Activated T-helper 1 cell treated with anti-CD3 and anti-CD28 coated beads, Interleukin-12 subunit alpha, Interleukin-12 subunit beta, Interleukin-2, Interleukin-4 antibody, amounts not matched to agents 30 ng/mL and 10 ng/mL and 1 ng/mL, durations not matched to agents 14 hours and 24 hours and 36 hours (primary cell): ENCODE measurements at regions of chr19 and their contacts with region 1.

Region 1: GRCh38 chr19:19033426-19034203 is at the starts of genes ARMC6 and SUGP2:
- DNase-seq: peak; percentile 89
- H3K4me3 Mint-ChIP-seq: peak within 1 kb of the TSS; percentile 98
- H3K27ac Mint-ChIP-seq: peak within 1 kb of the TSS; percentile 98
- H3K4me1 Mint-ChIP-seq: peaks cover 25% of the 10 kb centered on the region
- H3K27me3 Mint-ChIP-seq: no peaks in the 10 kb centered on the region
- total RNA-seq, gene ARMC6: 54.9 and 56.5 TPM in 2 replicates
- total RNA-seq, gene SUGP2: 114 and 128 TPM in 2 replicates

Region 2: DNA sequence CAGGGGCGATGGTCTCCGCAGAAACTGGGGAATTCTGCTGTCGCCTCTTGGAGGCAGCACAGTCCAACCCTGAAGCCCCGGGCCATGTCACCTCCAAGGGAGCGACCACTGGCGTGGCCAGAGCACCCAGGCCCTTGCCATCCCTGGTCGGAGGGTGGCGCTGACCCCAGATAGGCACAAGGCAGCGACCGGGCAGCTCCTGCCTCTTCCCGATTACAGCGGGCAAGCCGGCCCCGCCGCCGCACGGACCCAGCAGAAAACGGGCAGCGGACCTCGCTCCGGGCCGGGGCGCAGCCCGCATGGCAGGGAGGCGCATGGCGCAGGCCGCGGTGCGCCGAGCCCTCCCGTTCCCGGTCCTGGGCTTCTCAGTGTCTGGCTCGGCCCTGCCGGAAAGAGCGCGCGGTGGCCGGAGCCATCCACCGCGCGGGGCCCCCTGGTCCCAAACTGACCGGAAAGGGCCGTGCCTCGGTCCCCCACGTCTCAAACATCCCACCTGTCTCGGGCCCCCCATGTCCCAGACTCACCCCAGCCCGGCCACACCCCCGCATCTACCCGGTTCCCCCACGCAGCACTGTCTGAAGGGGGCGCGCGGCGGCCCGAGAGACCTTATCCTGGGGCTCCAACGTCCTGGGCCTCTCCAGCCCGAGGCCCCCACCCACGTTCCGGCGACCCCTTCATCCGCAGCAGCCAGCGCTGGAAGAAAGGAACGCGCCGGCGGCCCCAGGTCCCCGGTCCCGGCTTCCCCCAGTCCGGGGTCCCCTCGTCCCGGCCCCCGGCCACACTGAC is 138.4 kb before region 1 on chr19:
- intact Hi-C with region 1: no loop called
- DNase-seq: no peak
- H3K4me3 Mint-ChIP-seq: no peak overlapping the region
- H3K27ac Mint-ChIP-seq: no peak overlapping the region
- H3K4me1 Mint-ChIP-seq: no peaks in the 10 kb centered on the region
- H3K27me3 Mint-ChIP-seq: peaks cover 18% of the 10 kb centered on the region

Region 3: GRCh38 chr19:18932216-18932841 is 101.3 kb before region 1 on chr19:
- intact Hi-C with region 1: no loop called
- DNase-seq: peak; percentile 67
- H3K4me3 Mint-ChIP-seq: peak overlapping the region; percentile 73
- H3K27ac Mint-ChIP-seq: no peak overlapping the region
- H3K4me1 Mint-ChIP-seq: peaks cover 5% of the 10 kb centered on the region
- H3K27me3 Mint-ChIP-seq: peaks cover 8% of the 10 kb centered on the region

Region 4: GRCh38 chr19:19021115-19021514 is 12.5 kb before region 1 on chr19:
- intact Hi-C with region 1: no loop called
- DNase-seq: no peak
- H3K4me3 Mint-ChIP-seq: no peak overlapping the region
- H3K27ac Mint-ChIP-seq: no peak overlapping the region
- H3K4me1 Mint-ChIP-seq: peaks cover 20% of the 10 kb centered on the region
- H3K27me3 Mint-ChIP-seq: no peaks in the 10 kb centered on the region

Region 5: GRCh38 chr19:19063183-19064097 is 29.8 kb after region 1 on chr19 and contains the start of gene SLC25A42:
- intact Hi-C with region 1: loop called (anchors 1 kb)
- DNase-seq: peak; percentile 99
- H3K4me3 Mint-ChIP-seq: peak within 1 kb of the TSS; percentile 84
- H3K27ac Mint-ChIP-seq: peak within 1 kb of the TSS; percentile 62
- H3K4me1 Mint-ChIP-seq: peaks cover 29% of the 10 kb centered on the region
- H3K27me3 Mint-ChIP-seq: no peaks in the 10 kb centered on the region
- total RNA-seq, gene SLC25A42: 7.8 and 10.8 TPM in 2 replicates